ENCODE measurements at regions of chr1 and their contacts with region 1.

Region 1: GRCh38 chr1:39960431-39960958 is 5.5 kb downstream of the MFSD2A start:
- DNase-seq: peak in 25 of 35 experiments; percentile 6 to 50 (median 26)
- ATAC-seq: peak; percentile 47 to 77 (median 50)
- H3K4me3 ChIP-seq: peak overlapping the region in 1 of 2 donors; percentile 20
- H3K4me3 Mint-ChIP-seq: peak overlapping the region in 1 of 3 donors; percentile 27
- H3K27ac ChIP-seq: no peak overlapping the region
- H3K27ac Mint-ChIP-seq: no peak overlapping the region
- H3K4me1 ChIP-seq: peaks cover 7 to 21% of the 10 kb centered on the region in 2 experiments
- H3K4me1 Mint-ChIP-seq: peaks cover 19 to 20% (median 19%) of the 10 kb centered on the region in 3 donors
- H3K27me3 ChIP-seq: peaks cover 0 to 6% of the 10 kb centered on the region in 2 experiments
- H3K27me3 Mint-ChIP-seq: no peaks in the 10 kb centered on the region

Region 2: DNA sequence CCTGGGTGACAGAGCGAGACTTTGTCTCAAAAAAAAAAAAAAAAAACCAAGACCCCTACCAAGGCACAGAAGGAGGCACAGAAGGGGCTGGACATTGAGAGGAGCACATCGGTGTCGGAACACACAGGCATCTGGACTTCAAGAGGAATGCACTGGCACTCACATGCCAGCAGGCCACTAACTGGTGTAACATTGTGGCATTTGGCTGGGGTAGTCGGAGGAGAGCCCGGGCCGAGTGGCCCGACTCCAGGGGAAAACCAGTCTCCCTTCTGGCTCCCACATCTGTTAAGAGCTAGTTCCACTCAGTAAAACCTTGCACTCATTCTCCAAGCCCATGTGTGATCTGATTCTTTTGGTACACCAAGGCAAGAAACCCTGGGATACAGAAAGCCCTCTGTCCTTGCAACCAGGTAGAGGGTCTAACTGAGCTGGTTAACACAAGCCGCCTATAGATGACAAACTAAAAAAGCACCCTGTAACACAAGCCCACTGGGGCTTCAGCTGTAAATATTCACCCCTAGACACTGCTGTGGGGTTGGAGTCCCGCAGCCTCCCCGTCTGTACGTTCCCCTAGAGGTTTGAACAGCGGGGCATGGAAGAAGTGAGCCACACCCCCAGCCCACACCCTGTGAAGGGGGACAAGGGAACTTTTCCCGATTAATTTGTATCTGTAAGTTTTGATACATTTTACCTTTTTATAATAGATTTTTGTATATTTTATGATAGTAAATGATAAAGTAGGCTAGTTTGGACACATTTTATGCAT is 986.7 kb before region 1 on chr1:
- CTCF ChIA-PET with region 1: no interaction called
- POLR2A ChIA-PET with region 1: no interaction called
- DNase-seq: no peak
- ATAC-seq: no peak
- H3K4me3 ChIP-seq: no peak overlapping the region
- H3K4me3 Mint-ChIP-seq: no peak overlapping the region
- H3K27ac ChIP-seq: no peak overlapping the region
- H3K27ac Mint-ChIP-seq: no peak overlapping the region
- H3K4me1 ChIP-seq: peaks cover 4 to 21% of the 10 kb centered on the region in 2 experiments
- H3K4me1 Mint-ChIP-seq: peaks cover 7 to 17% (median 13%) of the 10 kb centered on the region in 3 donors
- H3K27me3 ChIP-seq: no peaks in the 10 kb centered on the region
- H3K27me3 Mint-ChIP-seq: no peaks in the 10 kb centered on the region

Region 3: DNA sequence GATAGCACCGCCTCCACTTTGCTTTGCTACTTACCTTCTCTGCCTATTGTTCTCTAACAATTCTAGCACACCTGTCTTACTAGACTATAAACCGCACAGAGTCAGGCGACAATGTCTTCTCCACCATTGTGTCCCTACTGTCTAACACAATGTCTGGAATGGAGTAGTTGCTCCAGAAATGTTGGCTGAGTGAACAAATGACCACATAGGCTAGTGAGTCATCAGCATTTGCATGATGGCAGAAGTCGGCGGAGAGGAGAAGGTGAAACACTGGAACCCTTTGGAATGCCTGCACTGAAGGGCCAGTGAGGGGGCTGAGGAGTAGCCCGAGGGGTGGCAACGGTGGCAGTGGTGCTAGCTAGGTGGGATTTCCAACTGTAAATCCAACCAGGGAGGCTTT is 369.9 kb before region 1 on chr1:
- CTCF ChIA-PET with region 1: no interaction called
- POLR2A ChIA-PET with region 1: interaction called in 1 of 2 experiments, 12 read pairs
- DNase-seq: no peak
- ATAC-seq: no peak
- H3K4me3 ChIP-seq: no peak overlapping the region
- H3K4me3 Mint-ChIP-seq: no peak overlapping the region
- H3K27ac ChIP-seq: no peak overlapping the region
- H3K27ac Mint-ChIP-seq: no peak overlapping the region
- H3K4me1 ChIP-seq: no peaks in the 10 kb centered on the region
- H3K4me1 Mint-ChIP-seq: no peaks in the 10 kb centered on the region
- H3K27me3 ChIP-seq: peaks cover 0 to 8% of the 10 kb centered on the region in 2 experiments
- H3K27me3 Mint-ChIP-seq: peaks cover 0 to 1% of the 10 kb centered on the region in 2 donors

Region 4: DNA sequence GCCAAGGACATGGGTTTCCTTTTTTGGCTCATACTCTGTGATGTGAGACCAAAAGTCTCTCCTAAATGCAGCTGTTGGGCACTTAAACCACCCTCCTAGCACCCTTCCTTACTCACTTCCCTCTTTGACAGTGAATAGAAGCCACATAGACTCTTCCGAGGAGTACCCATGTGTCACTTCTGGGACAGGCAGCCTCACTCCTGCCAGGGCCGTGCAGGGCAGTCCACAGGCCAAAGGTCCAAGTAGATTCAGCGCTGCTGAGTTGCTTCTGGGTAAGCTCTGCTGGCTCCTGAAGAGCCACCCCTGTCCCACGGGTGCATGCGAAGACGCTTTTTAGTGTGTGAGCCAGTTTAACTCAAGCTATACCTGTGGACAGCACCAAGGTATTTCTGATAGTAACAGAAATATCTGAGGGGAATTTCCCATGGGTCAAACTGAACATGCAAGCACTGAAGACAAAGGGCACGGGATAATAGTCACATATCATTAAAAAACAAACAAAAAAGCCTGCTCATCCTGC is 135.0 kb before region 1 on chr1:
- CTCF ChIA-PET with region 1: no interaction called
- POLR2A ChIA-PET with region 1: no interaction called
- DNase-seq: no peak
- ATAC-seq: no peak
- H3K4me3 ChIP-seq: no peak overlapping the region
- H3K4me3 Mint-ChIP-seq: no peak overlapping the region
- H3K27ac ChIP-seq: no peak overlapping the region
- H3K27ac Mint-ChIP-seq: no peak overlapping the region
- H3K4me1 ChIP-seq: no peaks in the 10 kb centered on the region
- H3K4me1 Mint-ChIP-seq: no peaks in the 10 kb centered on the region
- H3K27me3 ChIP-seq: peaks cover 3 to 16% of the 10 kb centered on the region in 2 experiments
- H3K27me3 Mint-ChIP-seq: peaks cover 19 to 27% of the 10 kb centered on the region in 2 donors

Region 5: DNA sequence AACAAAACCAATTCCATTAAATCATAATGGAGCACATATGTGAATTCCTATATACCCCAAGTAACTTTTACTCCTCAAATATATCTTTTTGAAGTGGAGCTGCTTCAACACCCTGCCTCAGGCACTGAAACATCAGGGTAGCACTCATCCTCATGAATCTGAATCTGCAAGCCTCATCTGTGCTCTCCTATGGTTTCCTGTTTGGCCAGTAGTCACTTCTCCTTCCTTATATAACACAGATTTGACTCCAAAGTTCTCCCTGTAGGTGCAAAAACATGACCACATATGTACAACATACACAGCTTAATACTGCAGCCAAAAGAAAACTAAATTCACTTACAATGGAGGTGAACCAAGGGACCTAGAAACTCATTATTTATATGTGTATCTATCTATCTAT is 84.4 kb before region 1 on chr1:
- CTCF ChIA-PET with region 1: interaction called in 1 of 2 experiments, 10 read pairs
- POLR2A ChIA-PET with region 1: interaction called in 1 of 2 experiments, 6 read pairs
- DNase-seq: no peak
- ATAC-seq: no peak
- H3K4me3 ChIP-seq: no peak overlapping the region
- H3K4me3 Mint-ChIP-seq: no peak overlapping the region
- H3K27ac ChIP-seq: no peak overlapping the region
- H3K27ac Mint-ChIP-seq: no peak overlapping the region
- H3K4me1 ChIP-seq: peaks cover 0 to 2% of the 10 kb centered on the region in 2 experiments
- H3K4me1 Mint-ChIP-seq: peaks cover 53 to 59% (median 55%) of the 10 kb centered on the region in 3 donors
- H3K27me3 ChIP-seq: no peaks in the 10 kb centered on the region
- H3K27me3 Mint-ChIP-seq: no peaks in the 10 kb centered on the region

Region 6: DNA sequence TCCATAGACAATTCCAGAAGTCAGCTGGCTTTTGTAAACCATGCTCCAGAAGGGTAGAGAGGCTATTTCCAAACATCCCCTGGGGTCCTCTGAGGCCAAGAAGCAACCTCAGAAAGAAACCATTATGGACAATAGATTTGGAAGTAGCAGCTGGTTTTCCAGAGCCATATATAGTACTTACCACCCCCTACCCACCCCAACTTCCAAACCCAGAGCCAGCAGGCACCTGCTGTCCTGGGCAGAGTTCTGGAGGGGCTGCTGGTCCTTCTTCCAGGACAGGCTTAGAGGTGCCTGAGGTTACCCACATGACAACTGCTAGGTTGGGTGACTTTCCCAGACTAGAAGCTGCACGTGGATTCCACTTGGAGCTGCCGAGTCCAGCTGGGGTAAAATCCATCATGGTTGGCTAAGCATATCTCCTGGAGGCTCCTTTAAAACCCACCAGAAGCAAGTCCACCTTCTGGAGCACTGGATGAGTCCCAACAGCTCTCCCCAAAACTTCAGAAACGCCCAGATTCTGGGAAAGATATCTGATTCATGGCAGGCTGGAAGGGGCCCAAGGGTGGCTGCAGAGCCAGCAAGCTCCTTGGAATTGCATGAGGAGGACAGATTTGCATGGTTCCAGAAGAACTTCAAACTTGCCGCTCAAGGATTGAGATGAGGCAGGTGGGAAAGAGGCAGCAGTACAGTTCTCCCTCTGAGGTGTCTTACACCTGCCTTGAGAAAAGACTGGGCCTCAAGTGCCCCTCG is 64.6 kb before region 1 on chr1:
- CTCF ChIA-PET with region 1: no interaction called
- POLR2A ChIA-PET with region 1: no interaction called
- DNase-seq: no peak
- ATAC-seq: no peak
- H3K4me3 ChIP-seq: no peak overlapping the region
- H3K4me3 Mint-ChIP-seq: no peak overlapping the region
- H3K27ac ChIP-seq: no peak overlapping the region
- H3K27ac Mint-ChIP-seq: no peak overlapping the region
- H3K4me1 ChIP-seq: peaks cover 0 to 3% of the 10 kb centered on the region in 2 experiments
- H3K4me1 Mint-ChIP-seq: peaks cover 0 to 2% (median 2%) of the 10 kb centered on the region in 3 donors
- H3K27me3 ChIP-seq: peaks cover 16 to 57% of the 10 kb centered on the region in 2 experiments
- H3K27me3 Mint-ChIP-seq: peaks cover 43 to 49% of the 10 kb centered on the region in 2 donors

Region 7: DNA sequence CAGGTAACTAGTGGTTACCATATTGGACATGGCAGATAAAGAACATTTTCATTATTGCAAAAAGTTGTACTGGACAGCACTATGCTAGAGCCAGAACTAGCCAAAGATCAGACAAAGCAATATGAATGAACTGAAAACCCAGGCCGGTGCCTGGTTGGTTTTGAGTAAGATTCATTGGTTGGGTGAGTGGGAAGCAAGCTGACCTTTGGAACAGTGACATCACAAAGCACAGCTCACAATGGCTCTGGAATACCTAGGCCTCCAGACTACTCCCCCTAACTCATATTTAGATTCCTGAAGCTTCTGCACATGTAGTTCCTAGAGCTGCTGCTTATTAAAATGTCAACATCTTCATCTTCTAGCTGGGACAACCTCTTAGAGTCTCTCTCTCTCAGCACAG is 287.2 kb after region 1 on chr1 and contains the start of gene TMCO2:
- CTCF ChIA-PET with region 1: no interaction called
- POLR2A ChIA-PET with region 1: no interaction called
- DNase-seq: no peak
- ATAC-seq: no peak
- H3K4me3 ChIP-seq: no peak within 1 kb of the TSS
- H3K4me3 Mint-ChIP-seq: no peak within 1 kb of the TSS
- H3K27ac ChIP-seq: no peak within 1 kb of the TSS
- H3K27ac Mint-ChIP-seq: no peak within 1 kb of the TSS
- H3K4me1 ChIP-seq: no peaks in the 10 kb centered on the region
- H3K4me1 Mint-ChIP-seq: peaks cover 0 to 8% (median 5%) of the 10 kb centered on the region in 3 donors
- H3K27me3 ChIP-seq: no peaks in the 10 kb centered on the region
- H3K27me3 Mint-ChIP-seq: no peaks in the 10 kb centered on the region
- total RNA-seq, gene TMCO2: not detected